Colonic mucosa (tissue), 4 donors: ENCODE measurements at regions of chr22 and their contacts with region 1.

Region 1: GRCh38 chr22:26756675-26757293 is 99.4 kb downstream of the MIAT start:
- DNase-seq: peak; percentile 37
- H3K4me3 ChIP-seq: peak overlapping the region; percentile 10
- H3K27ac ChIP-seq: no peak overlapping the region
- H3K4me1 ChIP-seq: no peaks in the 10 kb centered on the region
- H3K27me3 ChIP-seq: no peaks in the 10 kb centered on the region
- CTCF ChIP-seq: peak; percentile 87

Region 2: DNA sequence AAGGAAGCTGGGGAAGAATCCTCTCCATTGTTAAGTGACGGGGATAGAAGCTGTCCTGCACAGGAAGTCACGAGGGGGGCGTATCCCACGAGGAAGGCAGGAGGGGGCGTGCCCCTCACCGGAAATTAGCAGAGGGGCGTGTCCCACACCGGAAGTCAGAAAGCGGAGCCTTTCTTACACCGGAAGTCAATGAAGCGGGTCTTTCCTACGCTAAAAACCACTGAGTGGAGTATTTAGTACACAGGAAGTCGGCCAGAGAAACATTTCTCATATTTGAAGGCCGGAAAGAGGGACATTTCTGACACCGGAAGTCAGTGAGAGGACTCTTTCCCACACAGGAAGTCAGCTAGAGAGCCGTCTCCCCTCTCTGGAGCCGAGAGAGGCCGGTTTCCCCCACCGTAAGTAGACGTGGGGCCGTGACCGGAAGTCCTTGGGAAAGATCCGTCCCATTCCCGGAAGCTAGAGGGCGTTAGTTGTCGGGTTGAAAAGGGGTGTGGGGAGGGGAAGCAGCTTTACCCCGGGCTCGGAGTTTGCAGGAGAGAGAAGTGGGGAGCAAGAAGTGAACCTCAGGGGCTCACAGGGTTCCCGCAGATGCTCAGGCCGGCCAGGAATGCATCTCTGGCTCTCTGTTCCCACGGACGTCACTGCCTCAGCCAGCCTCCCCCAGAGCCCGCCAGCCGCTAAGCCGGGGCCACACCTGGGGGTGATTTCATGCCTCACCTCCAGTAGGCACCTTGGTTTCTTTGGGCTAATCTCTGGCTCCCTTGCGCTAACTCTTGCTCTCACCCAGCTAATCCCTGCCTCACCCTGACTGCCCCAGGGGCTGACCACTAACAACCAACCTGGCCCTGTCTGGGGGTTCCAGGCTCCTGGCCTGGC is 84.0 kb before region 1 on chr22:
- intact Hi-C with region 1: loop called (anchors 10 kb)
- DNase-seq: peak; percentile 95
- H3K4me3 ChIP-seq: peak overlapping the region; percentile 62
- H3K27ac ChIP-seq: peak overlapping the region; percentile 94
- H3K4me1 ChIP-seq: peaks cover 4% of the 10 kb centered on the region
- H3K27me3 ChIP-seq: no peaks in the 10 kb centered on the region
- CTCF ChIP-seq: peak; percentile 45

Region 3: GRCh38 chr22:26865021-26865420 is 108.2 kb after region 1 on chr22:
- intact Hi-C with region 1: no loop called
- DNase-seq: no peak
- H3K4me3 ChIP-seq: no peak overlapping the region
- H3K27ac ChIP-seq: no peak overlapping the region
- H3K4me1 ChIP-seq: no peaks in the 10 kb centered on the region
- H3K27me3 ChIP-seq: no peaks in the 10 kb centered on the region
- CTCF ChIP-seq: no peak

Region 4: GRCh38 chr22:27331526-27332281 is 574.9 kb after region 1 on chr22:
- intact Hi-C with region 1: loop called (anchors 5 kb)
- DNase-seq: no peak
- H3K4me3 ChIP-seq: no peak overlapping the region
- H3K27ac ChIP-seq: no peak overlapping the region
- H3K4me1 ChIP-seq: no peaks in the 10 kb centered on the region
- H3K27me3 ChIP-seq: peaks cover 5% of the 10 kb centered on the region
- CTCF ChIP-seq: peak; percentile 22

Region 5: GRCh38 chr22:27804470-27805297 is 1047.9 kb after region 1 on chr22:
- intact Hi-C with region 1: loop called (anchors 5 kb)
- DNase-seq: peak; percentile 64
- H3K4me3 ChIP-seq: no peak overlapping the region
- H3K27ac ChIP-seq: no peak overlapping the region
- H3K4me1 ChIP-seq: peaks cover 6% of the 10 kb centered on the region
- H3K27me3 ChIP-seq: peaks cover 25% of the 10 kb centered on the region
- CTCF ChIP-seq: peak; percentile 55